T-cell (primary cell): ENCODE measurements at regions of chr7 and their contacts with region 1.

Region 1: DNA sequence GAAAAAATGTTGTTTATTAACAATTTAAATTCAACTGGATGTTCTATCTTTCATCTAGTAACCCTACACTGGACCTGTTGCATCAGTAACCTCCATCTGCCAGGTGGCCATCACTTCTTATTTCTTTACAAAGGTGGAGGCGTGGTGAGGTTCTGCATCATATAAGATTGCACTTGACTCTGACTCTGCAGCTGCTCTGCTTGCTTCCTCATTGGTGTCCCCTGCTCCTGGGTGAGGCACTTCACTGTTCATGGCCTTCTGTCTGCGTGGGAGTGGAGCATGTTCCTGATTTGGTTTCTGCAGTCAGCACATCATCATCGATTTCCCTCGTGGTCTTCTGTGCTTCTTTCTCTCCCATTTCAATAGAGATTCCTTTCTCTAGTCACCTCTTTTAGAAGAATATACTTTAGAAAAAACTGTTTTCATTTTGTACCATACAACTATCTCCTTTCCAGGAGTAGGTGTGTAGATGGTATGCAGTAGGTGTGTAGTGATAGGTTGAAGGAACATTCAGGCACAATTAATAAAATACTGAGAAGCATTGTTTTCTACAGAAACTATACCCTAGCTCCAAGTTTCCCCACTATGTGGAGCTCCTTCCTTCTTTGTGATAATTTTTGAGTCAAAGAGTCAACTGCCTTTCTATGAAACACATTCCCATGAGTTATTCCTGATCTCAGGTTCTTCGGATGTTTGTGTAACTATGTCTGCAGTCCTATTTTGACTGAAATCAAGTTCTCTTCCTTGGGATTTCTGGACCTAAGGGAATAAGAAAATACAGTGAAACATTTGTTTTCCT is 231.7 kb upstream of the CNTNAP2 start:
- DNase-seq: no peak
- ATAC-seq: no peak
- H3K4me3 ChIP-seq: no peak overlapping the region
- H3K4me3 Mint-ChIP-seq: no peak overlapping the region
- H3K27ac ChIP-seq: no peak overlapping the region
- H3K27ac Mint-ChIP-seq: no peak overlapping the region
- H3K4me1 ChIP-seq: no peaks in the 10 kb centered on the region
- H3K4me1 Mint-ChIP-seq: no peaks in the 10 kb centered on the region
- H3K27me3 ChIP-seq: no peaks in the 10 kb centered on the region
- H3K27me3 Mint-ChIP-seq: no peaks in the 10 kb centered on the region

Region 2: DNA sequence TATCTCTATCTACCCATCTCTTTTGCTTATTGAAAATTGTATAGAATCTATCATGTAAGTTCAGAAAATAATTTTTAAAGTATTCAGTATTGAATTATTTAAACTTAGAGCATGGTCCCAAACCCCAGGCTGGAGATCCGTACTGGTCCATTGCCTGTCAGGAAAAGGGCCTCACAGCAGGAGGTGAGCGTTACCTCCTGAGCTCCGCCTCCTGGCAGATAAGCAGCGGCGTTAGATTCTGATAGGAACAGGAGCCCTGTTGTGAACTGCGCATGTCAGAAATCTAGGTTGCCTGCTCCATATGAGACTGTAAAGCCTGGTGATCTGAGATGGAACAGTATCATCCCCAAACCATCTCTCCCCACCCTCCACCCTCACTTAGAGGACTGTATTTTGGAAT is 34.3 kb before region 1 on chr7:
- CTCF ChIA-PET with region 1: no interaction called
- POLR2A ChIA-PET with region 1: no interaction called
- DNase-seq: no peak
- ATAC-seq: no peak
- H3K4me3 ChIP-seq: no peak overlapping the region
- H3K4me3 Mint-ChIP-seq: no peak overlapping the region
- H3K27ac ChIP-seq: no peak overlapping the region
- H3K27ac Mint-ChIP-seq: no peak overlapping the region
- H3K4me1 ChIP-seq: no peaks in the 10 kb centered on the region
- H3K4me1 Mint-ChIP-seq: no peaks in the 10 kb centered on the region
- H3K27me3 ChIP-seq: no peaks in the 10 kb centered on the region
- H3K27me3 Mint-ChIP-seq: no peaks in the 10 kb centered on the region

Region 3: GRCh38 chr7:146740039-146740438 is 855.1 kb after region 1 on chr7:
- CTCF ChIA-PET with region 1: interaction called in 1 of 2 experiments, 10 read pairs
- POLR2A ChIA-PET with region 1: no interaction called
- DNase-seq: no peak
- ATAC-seq: no peak
- H3K4me3 ChIP-seq: no peak overlapping the region
- H3K4me3 Mint-ChIP-seq: no peak overlapping the region
- H3K27ac ChIP-seq: no peak overlapping the region
- H3K27ac Mint-ChIP-seq: no peak overlapping the region
- H3K4me1 ChIP-seq: no peaks in the 10 kb centered on the region
- H3K4me1 Mint-ChIP-seq: no peaks in the 10 kb centered on the region
- H3K27me3 ChIP-seq: no peaks in the 10 kb centered on the region
- H3K27me3 Mint-ChIP-seq: no peaks in the 10 kb centered on the region